ENCODE measurements at regions of chr5 and their contacts with region 1.

Region 1: DNA sequence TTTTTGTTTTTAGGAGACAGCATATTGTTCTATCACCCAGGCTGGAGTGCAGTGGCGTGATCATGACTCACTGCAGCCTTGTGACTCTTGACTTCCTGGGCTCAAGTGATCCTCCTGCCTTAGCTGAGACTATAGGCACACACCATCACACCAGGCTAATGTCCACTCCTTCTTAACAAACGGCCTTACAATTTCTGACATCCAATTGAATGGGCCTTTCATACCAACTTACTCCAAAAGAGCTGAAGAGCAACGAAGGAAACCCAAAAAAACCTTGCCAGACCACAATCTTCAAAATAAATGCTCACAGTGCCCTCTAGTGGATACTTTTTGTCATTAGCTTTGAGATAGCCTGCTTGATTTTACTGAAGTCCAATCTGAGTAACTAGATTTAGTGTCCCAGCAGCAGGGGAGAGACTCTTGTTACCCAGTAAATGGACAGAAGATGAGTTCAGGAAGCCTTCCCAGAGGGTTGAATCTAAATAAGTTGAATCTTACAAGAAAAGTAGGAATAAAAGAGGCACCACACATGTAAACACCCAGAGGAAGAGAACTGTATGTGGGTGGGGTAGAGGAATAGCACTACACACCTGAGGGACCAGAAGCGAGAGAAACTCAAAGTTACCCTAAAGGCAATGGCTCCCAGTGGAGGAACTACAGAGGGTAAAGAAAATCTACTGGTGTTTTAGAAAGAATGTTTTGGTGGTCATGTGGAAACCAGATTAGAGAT is 9.3 kb downstream of the ZNF622 start:
- DNase-seq: no peak
- H3K4me3 ChIP-seq: no peak overlapping the region
- H3K27ac ChIP-seq: peak overlapping the region in 2 of 4 donors; percentile 21 to 30
- H3K4me1 ChIP-seq: peaks cover 0 to 55% (median 7%) of the 10 kb centered on the region in 3 donors
- H3K27me3 ChIP-seq: no peaks in the 10 kb centered on the region
- CTCF ChIP-seq: peak in 5 of 6 experiments; percentile 38 to 70 (median 61)
- POLR2A ChIP-seq: no peak

Region 2: DNA sequence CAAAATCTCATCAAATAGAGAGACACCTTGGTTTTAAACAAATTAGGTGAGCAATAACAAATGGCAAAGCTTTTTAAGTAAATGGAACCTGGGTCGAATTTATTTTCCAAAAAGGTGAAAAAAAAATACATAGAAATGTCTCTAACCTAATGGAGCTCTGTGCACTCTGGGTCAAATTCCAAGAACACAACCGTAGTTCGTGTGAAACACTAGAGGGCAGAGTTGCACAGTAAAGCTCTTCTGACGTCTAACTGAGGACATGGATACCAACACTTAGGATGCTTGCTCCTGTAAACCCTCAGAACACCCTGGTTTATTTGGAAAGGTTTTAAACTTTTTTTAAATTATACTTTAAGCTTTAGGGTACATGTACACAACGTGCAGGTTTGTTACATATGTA is 295.6 kb before region 1 on chr5:
- intact Hi-C with region 1: loop called (anchors 10 kb)
- DNase-seq: no peak
- H3K4me3 ChIP-seq: no peak overlapping the region
- H3K27ac ChIP-seq: no peak overlapping the region
- H3K4me1 ChIP-seq: no peaks in the 10 kb centered on the region
- H3K27me3 ChIP-seq: no peaks in the 10 kb centered on the region
- CTCF ChIP-seq: peak; percentile 9 to 57 (median 35)
- POLR2A ChIP-seq: no peak

Measured in esophagus squamous epithelium (tissue), 5 donors.